Activated CD4-positive, alpha-beta memory T cell treated with anti-CD3 and anti-CD28 coated beads, Interleukin-2, amount 10 ng/mL, durations not matched to agents 7 days and 5 days (primary cell): ENCODE measurements at regions of chr5 and their contacts with region 1.

Region 1: DNA sequence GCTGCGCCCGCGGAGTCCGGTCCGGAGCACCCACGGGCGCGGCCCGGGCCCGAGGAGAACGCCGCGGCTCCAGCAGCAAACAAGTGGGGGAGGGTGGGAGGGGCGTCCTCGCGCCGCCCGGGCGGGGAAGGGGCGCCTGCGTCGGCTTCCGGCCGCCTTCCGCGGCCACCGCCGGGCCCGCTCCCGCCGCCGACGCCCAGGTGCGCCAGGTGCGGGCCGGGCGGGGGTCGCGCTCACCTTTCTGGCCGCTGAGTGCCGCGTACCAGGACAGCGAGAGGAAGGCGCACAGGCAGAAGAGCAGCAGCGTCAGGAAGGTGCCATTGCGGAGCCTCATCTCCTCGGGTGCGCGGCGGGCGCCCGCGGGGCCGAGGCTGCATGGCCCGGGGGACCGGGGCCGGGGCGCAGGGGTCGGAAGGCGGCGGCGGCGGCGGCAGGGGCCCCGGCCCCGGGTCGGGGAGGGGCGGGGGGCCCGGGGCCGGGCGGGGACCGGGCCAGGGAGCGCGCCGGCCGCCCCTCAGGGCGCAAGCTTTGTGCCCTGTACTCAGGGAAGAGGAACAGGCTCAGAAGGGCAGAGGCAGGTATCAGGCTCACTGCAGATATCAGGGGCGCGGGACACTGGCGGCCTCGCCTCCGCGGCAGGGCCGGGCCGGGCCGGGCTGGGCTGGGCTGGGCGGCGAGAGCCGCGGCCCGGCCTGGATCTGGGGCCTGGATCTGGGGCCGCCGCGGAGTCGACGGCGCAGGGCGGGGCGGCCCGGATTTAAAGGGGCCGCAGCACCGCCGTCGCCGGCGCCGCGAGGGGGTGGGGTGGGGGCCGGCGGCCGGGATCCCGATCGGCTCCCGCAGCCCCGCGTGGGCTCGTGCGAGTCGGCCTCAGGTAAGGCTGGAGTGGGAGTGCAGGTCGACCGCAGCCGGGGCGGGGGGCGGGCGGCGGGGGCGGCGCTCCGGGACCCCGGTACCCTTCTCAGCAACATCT is at the start of gene MGAT4B:
- DNase-seq: peak; percentile 75
- H3K4me3 Mint-ChIP-seq: peak within 1 kb of the TSS; percentile 85
- H3K27ac Mint-ChIP-seq: peak within 1 kb of the TSS; percentile 77
- H3K4me1 Mint-ChIP-seq: peaks cover 33% of the 10 kb centered on the region
- H3K27me3 Mint-ChIP-seq: no peaks in the 10 kb centered on the region
- total RNA-seq, gene MGAT4B: 94.8 to 95.7 TPM

Region 2: GRCh38 chr5:179795863-179796833 is 10.4 kb before region 1 on chr5:
- CTCF ChIA-PET with region 1: interaction called, 5 read pairs
- POLR2A ChIA-PET with region 1: interaction called, 37 read pairs
- DNase-seq: peak; percentile 76
- H3K4me3 Mint-ChIP-seq: peak overlapping the region; percentile 59
- H3K27ac Mint-ChIP-seq: peak overlapping the region; percentile 30
- H3K4me1 Mint-ChIP-seq: peaks cover 26% of the 10 kb centered on the region
- H3K27me3 Mint-ChIP-seq: no peaks in the 10 kb centered on the region

Region 3: DNA sequence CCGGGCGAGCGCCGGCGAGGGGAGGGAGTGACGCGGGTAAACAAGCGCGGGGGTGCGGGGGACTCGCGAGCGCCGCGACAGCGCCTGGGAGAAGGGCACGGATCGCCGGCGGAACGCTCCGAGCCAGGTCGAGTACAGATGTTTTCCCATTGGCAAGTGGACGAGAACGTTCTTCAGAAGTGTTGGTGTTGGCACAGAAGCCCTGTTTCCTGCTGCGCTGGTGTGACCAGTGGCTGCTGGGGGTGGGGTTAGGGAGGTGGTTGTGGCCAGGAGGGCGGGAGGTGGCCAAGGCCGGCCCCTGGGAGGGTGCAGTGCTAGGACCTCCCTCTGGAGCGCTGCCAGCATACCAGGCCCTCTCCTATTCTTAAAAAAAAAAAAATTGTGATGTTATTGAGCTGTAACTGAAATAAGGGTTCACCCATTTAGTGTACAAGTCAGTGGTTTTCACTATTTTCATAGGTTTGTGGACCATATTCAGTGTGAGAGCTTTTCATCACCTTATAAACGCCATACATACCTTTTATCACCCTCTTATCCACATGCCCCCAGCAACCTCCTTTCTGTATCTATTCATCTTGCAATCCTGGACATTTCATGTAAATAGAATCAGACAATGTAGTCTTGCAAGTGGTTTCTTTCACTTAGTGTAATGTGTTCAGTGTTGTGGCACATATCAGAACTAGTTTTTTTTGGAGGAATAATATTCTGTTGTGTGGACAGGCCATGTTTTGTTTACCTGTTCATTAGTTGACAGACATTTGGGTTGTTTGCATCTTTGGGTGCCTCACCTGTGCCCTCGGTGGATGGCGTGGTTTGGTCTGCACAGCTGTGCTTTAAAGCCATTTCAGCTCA is 15.3 kb after region 1 on chr5:
- CTCF ChIA-PET with region 1: interaction called, 6 read pairs
- POLR2A ChIA-PET with region 1: interaction called, 19 read pairs
- DNase-seq: peak; percentile 91
- H3K4me3 Mint-ChIP-seq: peak overlapping the region; percentile 93
- H3K27ac Mint-ChIP-seq: peak overlapping the region; percentile 97
- H3K4me1 Mint-ChIP-seq: peaks cover 52% of the 10 kb centered on the region
- H3K27me3 Mint-ChIP-seq: no peaks in the 10 kb centered on the region

Region 4: DNA sequence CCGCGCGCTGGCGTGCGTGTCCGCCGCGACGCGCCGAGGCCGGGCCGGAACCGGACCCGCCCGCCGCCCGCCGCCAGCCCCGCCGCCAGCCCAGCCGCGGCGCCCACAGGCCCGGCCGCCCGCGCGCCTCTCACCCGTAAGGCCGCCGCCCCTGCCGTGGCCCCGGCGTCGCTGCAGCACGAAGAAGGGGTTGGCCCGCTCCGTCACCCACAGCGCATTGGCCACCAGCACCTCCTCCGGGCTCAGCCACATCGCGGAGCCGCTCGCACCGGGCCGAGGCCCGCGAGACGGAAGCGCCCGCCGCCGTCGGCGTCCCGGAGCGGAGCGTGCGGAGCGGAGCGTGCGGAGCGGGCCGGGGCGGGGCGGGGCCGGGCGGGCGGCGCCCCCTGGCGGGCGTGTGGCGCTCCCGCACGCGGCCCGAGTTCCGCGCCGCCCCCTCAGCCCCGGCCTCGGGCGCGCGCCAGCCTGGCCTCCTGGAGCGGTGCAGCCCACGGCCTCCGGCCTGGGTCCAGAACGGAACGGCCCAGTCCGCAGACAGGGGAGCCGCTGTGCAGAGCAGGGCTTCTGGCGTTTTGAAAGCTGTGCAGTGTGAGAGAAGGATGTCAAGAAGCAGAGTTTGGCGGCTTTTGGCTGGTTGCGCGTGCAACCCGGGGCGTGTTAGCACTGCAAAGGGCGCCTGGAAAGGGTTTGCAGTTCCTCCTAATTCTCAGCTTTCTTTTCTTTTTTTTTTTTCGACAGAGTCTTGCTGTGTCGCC is 101.2 kb after region 1 on chr5 and contains the start of gene TBC1D9B:
- CTCF ChIA-PET with region 1: interaction called, 19 read pairs
- POLR2A ChIA-PET with region 1: interaction called, 5 read pairs
- DNase-seq: peak; percentile 70
- H3K4me3 Mint-ChIP-seq: peak within 1 kb of the TSS; percentile 87
- H3K27ac Mint-ChIP-seq: peak within 1 kb of the TSS; percentile 62
- H3K4me1 Mint-ChIP-seq: peaks cover 15% of the 10 kb centered on the region
- H3K27me3 Mint-ChIP-seq: no peaks in the 10 kb centered on the region
- total RNA-seq, gene TBC1D9B: 64.1 to 69.2 TPM

Region 5: GRCh38 chr5:179930788-179931473 is 124.4 kb after region 1 on chr5:
- CTCF ChIA-PET with region 1: no interaction called
- POLR2A ChIA-PET with region 1: no interaction called
- DNase-seq: no peak
- H3K4me3 Mint-ChIP-seq: no peak overlapping the region
- H3K27ac Mint-ChIP-seq: no peak overlapping the region
- H3K4me1 Mint-ChIP-seq: no peaks in the 10 kb centered on the region
- H3K27me3 Mint-ChIP-seq: no peaks in the 10 kb centered on the region